HepG2 (cell line): ENCODE measurements at regions of chr13 and their contacts with region 1.

Region 1: GRCh38 chr13:52450012-52450792 is at the start of gene VPS36:
- DNase-seq: peak; percentile 83
- ATAC-seq: peak; percentile 86
- H3K4me3 ChIP-seq: peak within 1 kb of the TSS; percentile 66 to 87 (median 84)
- H3K27ac ChIP-seq: peak within 1 kb of the TSS; percentile 88
- H3K4me1 ChIP-seq: peaks cover 37% of the 10 kb centered on the region
- H3K27me3 ChIP-seq: no peaks in the 10 kb centered on the region; a peak in 1 of 5 replicates
- CTCF ChIP-seq: peak; percentile 98
- EP300 ChIP-seq: peak in 1 of 2 experiments; percentile 66; a peak in 1 of 4 replicates
- POLR2A ChIP-seq: peak in 1 of 2 experiments; percentile 90; a peak in 2 of 4 replicates
- RAD21 ChIP-seq: peak; percentile 95
- total RNA-seq, gene VPS36: 22.0 and 22.4 TPM in 2 replicates

Region 2: DNA sequence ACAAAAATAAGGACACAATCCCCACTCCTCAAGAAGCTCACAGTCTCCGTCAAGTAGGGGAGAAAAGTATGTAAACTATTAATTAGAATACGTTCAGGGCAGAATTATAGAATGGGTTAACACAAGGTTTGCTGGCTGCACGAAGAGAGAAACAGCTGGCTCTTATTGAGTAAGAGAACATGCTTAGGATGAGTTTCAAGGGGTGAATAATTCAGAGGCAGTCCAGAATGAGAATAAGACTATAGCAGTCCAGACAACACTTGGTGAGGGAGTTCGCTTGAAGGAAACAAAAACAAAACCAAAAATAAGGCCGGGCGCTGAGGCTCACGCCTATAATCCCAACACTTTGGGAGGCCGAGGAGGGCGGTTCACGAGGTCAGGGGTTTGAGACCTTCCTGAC is 106.1 kb before region 1 on chr13:
- CTCF ChIA-PET with region 1: interaction called, 11 read pairs
- POLR2A ChIA-PET with region 1: interaction called, 3 read pairs
- in situ Hi-C with region 1: loop called (anchors 10 kb)
- intact Hi-C with region 1: loop called (anchors 1 kb)
- DNase-seq: no peak
- ATAC-seq: no peak
- H3K4me3 ChIP-seq: no peak overlapping the region
- H3K27ac ChIP-seq: no peak overlapping the region
- H3K4me1 ChIP-seq: no peaks in the 10 kb centered on the region
- H3K27me3 ChIP-seq: peaks cover 0 to 3% of the 10 kb centered on the region in 2 experiments; a peak in 1 of 5 replicates
- CTCF ChIP-seq: no peak
- EP300 ChIP-seq: no peak
- POLR2A ChIP-seq: no peak
- RAD21 ChIP-seq: no peak

Region 3: DNA sequence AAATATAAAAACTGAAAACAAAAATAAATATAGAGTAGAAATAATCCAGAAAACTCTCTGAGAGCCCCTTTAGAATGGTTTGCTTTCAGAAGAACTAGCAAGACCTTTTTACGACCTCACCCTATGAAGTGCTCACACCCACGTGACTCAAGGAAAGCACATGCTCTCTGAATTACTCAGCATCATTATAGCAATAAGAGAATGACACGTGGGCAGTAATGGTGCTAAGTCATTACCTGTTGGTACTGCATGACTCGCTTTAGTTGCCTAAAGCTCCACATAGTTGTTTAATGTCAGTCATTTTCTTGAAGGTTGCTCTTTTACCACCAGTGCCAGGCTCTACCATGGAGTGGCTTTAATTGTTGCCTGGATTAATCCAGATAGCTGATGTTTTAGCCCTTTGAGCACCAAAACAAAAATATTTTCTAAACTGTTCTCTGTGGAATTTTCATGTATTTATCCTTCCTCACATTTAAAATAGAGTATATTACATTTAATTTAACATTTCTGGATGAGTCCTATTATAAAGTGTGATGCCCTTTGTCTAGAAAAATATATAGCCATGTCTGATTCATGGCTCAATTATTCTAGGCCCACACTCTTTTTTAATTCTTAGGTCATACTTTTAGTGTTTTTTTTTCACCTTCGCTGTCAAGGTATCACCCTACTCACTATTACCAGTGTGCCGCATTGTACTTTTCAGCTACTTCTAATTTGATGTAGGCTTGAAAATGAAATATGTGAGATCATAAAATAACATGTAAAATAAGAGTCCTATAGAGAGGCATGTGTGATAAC is 101.0 kb before region 1 on chr13:
- CTCF ChIA-PET with region 1: interaction called, 11 read pairs
- POLR2A ChIA-PET with region 1: no interaction called
- in situ Hi-C with region 1: loop called (anchors 10 kb)
- intact Hi-C with region 1: no loop called
- DNase-seq: no peak
- ATAC-seq: no peak
- H3K4me3 ChIP-seq: no peak overlapping the region
- H3K27ac ChIP-seq: no peak overlapping the region
- H3K4me1 ChIP-seq: no peaks in the 10 kb centered on the region
- H3K27me3 ChIP-seq: peaks cover 0 to 3% of the 10 kb centered on the region in 2 experiments; a peak in 2 of 5 replicates
- CTCF ChIP-seq: no peak
- EP300 ChIP-seq: no peak
- POLR2A ChIP-seq: no peak
- RAD21 ChIP-seq: no peak

Region 4: GRCh38 chr13:52428295-52428694 is 21.9 kb before region 1 on chr13:
- CTCF ChIA-PET with region 1: no interaction called
- POLR2A ChIA-PET with region 1: interaction called, 9 read pairs
- in situ Hi-C with region 1: no loop called
- intact Hi-C with region 1: loop called (anchors 2 kb)
- DNase-seq: peak; percentile 82
- ATAC-seq: peak; percentile 92
- H3K4me3 ChIP-seq: no peak overlapping the region
- H3K27ac ChIP-seq: no peak overlapping the region
- H3K4me1 ChIP-seq: peaks cover 17% of the 10 kb centered on the region
- H3K27me3 ChIP-seq: no peaks in the 10 kb centered on the region
- CTCF ChIP-seq: no peak
- EP300 ChIP-seq: no peak
- POLR2A ChIP-seq: no peak
- RAD21 ChIP-seq: no peak

Region 5: GRCh38 chr13:52652196-52652979 is 202.2 kb after region 1 on chr13 and contains the start of gene SUGT1:
- CTCF ChIA-PET with region 1: no interaction called
- POLR2A ChIA-PET with region 1: interaction called, 10 read pairs
- in situ Hi-C with region 1: no loop called
- intact Hi-C with region 1: loop called (anchors 10 kb)
- DNase-seq: peak; percentile 94
- ATAC-seq: peak; percentile 98
- H3K4me3 ChIP-seq: peak within 1 kb of the TSS; percentile 90 to 95 (median 92)
- H3K27ac ChIP-seq: peak within 1 kb of the TSS; percentile 100
- H3K4me1 ChIP-seq: peaks cover 43% of the 10 kb centered on the region
- H3K27me3 ChIP-seq: no peaks in the 10 kb centered on the region; a peak in 1 of 5 replicates
- CTCF ChIP-seq: peak; percentile 70
- EP300 ChIP-seq: no peak
- POLR2A ChIP-seq: peak; percentile 91 to 93
- RAD21 ChIP-seq: no peak; the same call in 1 of the 2 replicates
- total RNA-seq, gene SUGT1: 71.2 and 113 TPM in 2 replicates

Region 6: DNA sequence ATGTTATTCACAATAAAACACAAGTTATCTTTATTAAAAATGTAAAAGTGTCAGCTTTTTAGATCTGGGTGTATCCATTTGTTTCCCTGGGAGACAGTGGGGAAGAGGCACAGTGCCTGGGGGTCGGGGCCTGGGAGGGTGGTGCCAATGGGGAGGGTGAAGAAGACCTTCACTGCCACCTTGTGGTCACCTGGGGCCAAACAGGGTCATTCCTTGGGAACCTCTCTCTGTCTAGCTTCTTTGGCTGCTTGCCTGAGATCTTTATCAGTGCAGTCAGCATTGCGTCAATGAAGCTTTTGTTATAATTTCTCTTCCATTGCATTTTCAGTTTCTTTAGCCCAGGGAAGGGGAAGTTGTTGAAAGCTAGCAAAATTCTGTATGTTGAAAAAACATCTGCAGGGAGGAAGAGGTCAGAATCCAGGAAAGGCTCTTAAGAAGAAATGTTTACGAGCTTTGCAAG is 359.1 kb after region 1 on chr13:
- CTCF ChIA-PET with region 1: no interaction called
- POLR2A ChIA-PET with region 1: no interaction called
- in situ Hi-C with region 1: no loop called
- intact Hi-C with region 1: loop called (anchors 5 kb)
- DNase-seq: peak; percentile 80
- ATAC-seq: peak; percentile 97
- H3K4me3 ChIP-seq: no peak overlapping the region
- H3K27ac ChIP-seq: no peak overlapping the region
- H3K4me1 ChIP-seq: peaks cover 7% of the 10 kb centered on the region; the same call in 1 of the 2 replicates
- H3K27me3 ChIP-seq: 0 out of 5 replicates have a peak, but pooled peaks cover 0 to 4% of the 10 kb centered on the region in 2 experiments
- CTCF ChIP-seq: peak; percentile 90
- EP300 ChIP-seq: no peak
- POLR2A ChIP-seq: no peak
- RAD21 ChIP-seq: peak; percentile 69